ENCODE measurements at regions of chr7 and their contacts with region 1.

Region 1: GRCh38 chr7:104621321-104621720 is 292.9 kb downstream of the LHFPL3 start:
- DNase-seq: no peak
- H3K4me3 ChIP-seq: no peak overlapping the region
- H3K27ac ChIP-seq: no peak overlapping the region
- H3K4me1 ChIP-seq: peaks cover 0 to 16% of the 10 kb centered on the region in 2 experiments; a peak in 2 of 4 replicates
- H3K27me3 ChIP-seq: no peaks in the 10 kb centered on the region
- CTCF ChIP-seq: no peak
- EP300 ChIP-seq: peak in 1 of 2 experiments; percentile 57; a peak in 1 of 4 replicates
- RAD21 ChIP-seq: no peak

Region 2: DNA sequence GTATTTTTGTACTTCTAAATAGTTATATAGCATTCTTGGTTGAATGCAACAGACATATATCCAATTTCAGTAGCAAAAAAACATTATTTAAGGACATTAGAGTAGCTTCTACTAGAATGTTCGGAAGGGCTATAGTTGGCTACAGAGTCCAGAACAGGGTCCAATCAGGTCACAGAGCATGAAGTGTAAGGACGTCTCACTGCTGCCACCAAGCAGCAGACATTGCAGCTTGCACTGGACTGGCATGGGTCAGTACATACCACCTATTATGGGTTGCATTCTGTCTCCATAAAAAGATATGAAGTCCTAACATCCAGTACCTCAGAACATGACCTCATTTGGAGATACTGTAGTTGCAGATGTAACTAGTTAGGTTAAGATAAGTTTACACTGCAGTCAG is 205.6 kb before region 1 on chr7:
- CTCF ChIA-PET with region 1: no interaction called
- POLR2A ChIA-PET with region 1: no interaction called
- DNase-seq: no peak
- H3K4me3 ChIP-seq: no peak overlapping the region
- H3K27ac ChIP-seq: no peak overlapping the region
- H3K4me1 ChIP-seq: no peaks in the 10 kb centered on the region
- H3K27me3 ChIP-seq: 0 out of 2 replicates have a peak, but pooled peaks cover 6% of the 10 kb centered on the region
- CTCF ChIP-seq: no peak
- EP300 ChIP-seq: no peak
- RAD21 ChIP-seq: no peak

Region 3: GRCh38 chr7:104643587-104644217 is 22.4 kb after region 1 on chr7:
- CTCF ChIA-PET with region 1: interaction called, 16 read pairs
- POLR2A ChIA-PET with region 1: no interaction called
- DNase-seq: peak; percentile 49
- H3K4me3 ChIP-seq: no peak overlapping the region
- H3K27ac ChIP-seq: no peak overlapping the region
- H3K4me1 ChIP-seq: peaks cover 0 to 2% of the 10 kb centered on the region in 2 experiments; a peak in 1 of 4 replicates
- H3K27me3 ChIP-seq: no peaks in the 10 kb centered on the region; the same call in 1 of the 2 replicates
- CTCF ChIP-seq: peak; percentile 81
- EP300 ChIP-seq: no peak
- RAD21 ChIP-seq: peak; percentile 62

Region 4: GRCh38 chr7:104862719-104863118 is 241.4 kb after region 1 on chr7:
- CTCF ChIA-PET with region 1: no interaction called
- POLR2A ChIA-PET with region 1: no interaction called
- DNase-seq: peak; percentile 63
- H3K4me3 ChIP-seq: no peak overlapping the region
- H3K27ac ChIP-seq: no peak overlapping the region
- H3K4me1 ChIP-seq: peaks cover 0 to 4% of the 10 kb centered on the region in 2 experiments; a peak in 1 of 4 replicates
- H3K27me3 ChIP-seq: peaks cover 54% of the 10 kb centered on the region
- CTCF ChIP-seq: peak; percentile 58
- EP300 ChIP-seq: no peak
- RAD21 ChIP-seq: peak; percentile 66